Mammary epithelial cell (primary cell): ENCODE measurements at regions of chrX and their contacts with region 1.

Region 1: DNA sequence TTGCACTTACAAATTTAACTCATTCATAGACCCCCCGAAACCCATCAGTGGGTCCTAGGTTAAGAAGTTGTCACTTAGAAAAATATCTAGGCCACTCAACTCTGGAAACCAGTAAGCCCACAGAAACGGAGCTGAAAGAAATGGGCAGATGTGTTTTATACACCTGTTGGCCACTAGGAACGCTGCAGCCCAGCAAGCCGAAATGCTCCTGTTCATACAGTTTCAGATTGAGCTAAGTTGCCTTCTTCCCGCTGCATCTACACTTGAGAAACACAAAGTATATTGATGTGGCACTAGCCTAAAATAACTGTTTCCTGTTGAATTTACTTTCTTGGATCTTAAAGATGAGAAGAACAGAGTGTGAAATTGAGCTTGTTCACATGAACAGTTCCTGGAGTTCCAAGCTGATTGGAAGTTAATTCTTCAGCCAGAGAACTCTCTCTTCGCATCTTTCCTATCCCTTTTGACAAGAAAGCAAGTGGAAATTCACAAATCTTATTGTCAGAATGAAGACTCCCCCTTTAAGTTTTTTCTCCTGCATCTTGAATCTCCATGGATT is 174.1 kb downstream of the RBMX2 start:
- DNase-seq: peak; percentile 7
- H3K4me3 ChIP-seq: no peak overlapping the region
- H3K27ac ChIP-seq: no peak overlapping the region
- H3K4me1 ChIP-seq: no peaks in the 10 kb centered on the region
- H3K27me3 ChIP-seq: no peaks in the 10 kb centered on the region
- CTCF ChIP-seq: peak; percentile 79 to 88

Region 2: DNA sequence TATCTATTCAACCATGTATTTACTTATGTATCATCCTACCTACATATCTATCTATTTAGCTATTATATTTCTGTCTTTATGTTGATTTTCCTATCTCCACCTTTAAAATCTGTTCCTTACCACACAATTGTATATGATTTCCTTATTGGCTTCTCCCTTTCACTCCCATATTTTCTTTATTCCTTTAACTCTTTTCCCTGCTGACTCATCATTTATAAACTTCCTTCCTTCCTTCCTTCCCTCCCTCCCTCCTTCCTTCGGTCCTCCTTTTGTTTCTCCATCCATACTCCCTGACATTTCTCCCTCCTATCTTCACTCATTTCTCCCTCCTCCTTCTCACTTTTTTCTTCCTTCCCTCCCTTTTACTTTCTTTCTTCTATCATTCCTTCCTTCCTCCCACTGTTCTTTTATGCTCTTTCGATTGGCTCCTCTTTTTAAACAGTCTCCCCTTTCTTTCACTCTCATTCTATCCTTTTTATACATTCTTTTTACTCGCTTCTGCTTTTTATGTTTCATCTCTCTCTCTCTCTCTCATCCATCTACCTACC is 73.8 kb before region 1 on chrX:
- CTCF ChIA-PET with region 1: interaction called, 10 read pairs
- dilution Hi-C with region 1: no loop called
- in situ Hi-C with region 1: no loop called
- intact Hi-C with region 1: no loop called
- DNase-seq: no peak
- H3K4me3 ChIP-seq: no peak overlapping the region
- H3K27ac ChIP-seq: no peak overlapping the region
- H3K4me1 ChIP-seq: no peaks in the 10 kb centered on the region
- H3K27me3 ChIP-seq: no peaks in the 10 kb centered on the region
- CTCF ChIP-seq: no peak

Region 3: DNA sequence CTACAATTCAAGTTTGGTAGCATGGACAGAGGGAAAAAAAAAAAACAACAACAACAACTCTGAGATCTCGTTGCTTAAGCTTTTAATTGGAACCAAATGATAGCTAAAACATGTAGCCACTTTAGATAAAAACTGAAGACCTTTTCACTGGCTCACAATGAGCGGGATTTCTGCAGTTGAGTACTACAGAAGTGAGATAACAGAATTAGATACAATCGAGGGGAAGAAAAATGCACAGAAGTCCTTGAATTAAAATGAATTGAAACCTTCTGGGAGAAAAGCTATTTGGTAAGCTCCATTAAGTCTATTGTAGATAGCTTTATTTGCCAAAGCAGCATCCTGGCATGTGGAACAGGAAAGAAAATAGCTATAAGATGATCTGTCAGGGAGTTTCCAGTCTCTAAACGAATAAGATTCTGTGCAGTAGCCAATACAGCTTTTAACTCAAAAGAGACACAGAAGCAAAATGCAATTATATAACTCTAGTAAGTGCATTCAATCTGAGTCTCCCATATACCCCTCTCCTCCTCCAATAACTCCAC is 78.6 kb after region 1 on chrX:
- CTCF ChIA-PET with region 1: no interaction called
- dilution Hi-C with region 1: loop called (anchors 5 kb)
- in situ Hi-C with region 1: no loop called
- intact Hi-C with region 1: no loop called
- DNase-seq: no peak
- H3K4me3 ChIP-seq: no peak overlapping the region
- H3K27ac ChIP-seq: no peak overlapping the region
- H3K4me1 ChIP-seq: no peaks in the 10 kb centered on the region
- H3K27me3 ChIP-seq: no peaks in the 10 kb centered on the region
- CTCF ChIP-seq: no peak